ENCODE measurements at regions of chr9 and their contacts with region 1.

Region 1: GRCh38 chr9:36873247-36873875 is 160.7 kb downstream of the PAX5 start:
- DNase-seq: peak; percentile 43
- H3K4me3 ChIP-seq: no peak overlapping the region
- H3K27ac ChIP-seq: no peak overlapping the region
- H3K4me1 ChIP-seq: no peaks in the 10 kb centered on the region
- H3K27me3 ChIP-seq: peaks cover 4 to 16% of the 10 kb centered on the region in 2 experiments
- CTCF ChIP-seq: peak; percentile 80 to 90
- POLR2A ChIP-seq: no peak

Region 2: DNA sequence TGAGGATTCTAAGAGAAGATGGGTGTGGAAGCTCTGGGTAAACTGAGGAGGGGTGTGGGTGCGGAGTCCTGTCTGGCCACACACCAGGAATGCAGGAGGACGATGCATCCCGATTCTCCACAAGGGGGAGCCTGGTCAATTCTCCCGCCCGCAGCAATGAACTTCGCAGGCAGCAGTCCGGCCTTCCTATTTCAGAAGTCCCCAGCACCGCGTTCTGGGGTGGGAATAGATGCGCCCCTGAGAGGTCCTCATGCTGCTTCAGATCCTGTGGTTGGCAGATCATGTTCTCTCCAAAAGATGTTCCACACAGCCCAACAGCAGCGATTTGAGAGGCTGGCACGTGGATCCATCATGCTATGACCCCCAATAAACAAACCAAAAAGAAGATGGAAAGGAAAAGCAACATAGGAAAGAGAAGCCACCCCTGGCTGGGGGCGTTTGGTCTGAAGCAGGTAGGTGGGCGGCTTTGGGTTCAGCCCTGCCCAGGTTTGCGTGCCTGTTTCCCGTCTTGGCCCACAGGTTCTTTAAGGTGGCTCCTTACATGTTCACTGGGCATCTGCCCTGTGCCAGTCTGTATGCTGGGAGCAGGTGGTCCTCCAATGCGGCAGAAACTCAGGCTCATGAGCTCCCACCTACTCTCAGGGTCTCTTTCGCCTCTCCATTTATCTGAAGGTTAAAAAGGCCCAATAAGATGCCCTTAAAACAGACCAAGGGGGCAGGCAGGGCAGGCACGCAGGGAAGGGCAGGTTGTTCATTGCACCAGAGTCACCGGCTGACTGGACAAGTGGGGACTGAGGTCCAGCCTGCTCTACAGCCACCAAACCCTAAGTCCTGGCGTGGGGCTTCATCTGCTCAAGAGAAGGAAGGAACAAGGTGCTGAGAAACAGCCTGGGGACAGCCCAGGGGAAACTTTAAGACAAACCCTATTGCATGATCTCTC is 10.9 kb before region 1 on chr9:
- CTCF ChIA-PET with region 1: interaction called, 52 read pairs
- POLR2A ChIA-PET with region 1: no interaction called
- dilution Hi-C with region 1: no loop called
- intact Hi-C with region 1: no loop called
- DNase-seq: peak; percentile 40
- H3K4me3 ChIP-seq: no peak overlapping the region
- H3K27ac ChIP-seq: no peak overlapping the region
- H3K4me1 ChIP-seq: no peaks in the 10 kb centered on the region
- H3K27me3 ChIP-seq: peaks cover 26 to 35% of the 10 kb centered on the region in 2 experiments
- CTCF ChIP-seq: peak; percentile 65 to 84
- POLR2A ChIP-seq: no peak

Region 3: GRCh38 chr9:36903541-36904435 is 30.4 kb after region 1 on chr9:
- CTCF ChIA-PET with region 1: interaction called, 14 read pairs
- POLR2A ChIA-PET with region 1: no interaction called
- dilution Hi-C with region 1: no loop called
- intact Hi-C with region 1: no loop called
- DNase-seq: peak; percentile 80
- H3K4me3 ChIP-seq: no peak overlapping the region
- H3K27ac ChIP-seq: no peak overlapping the region
- H3K4me1 ChIP-seq: peaks cover 3% of the 10 kb centered on the region
- H3K27me3 ChIP-seq: peaks cover 20 to 22% of the 10 kb centered on the region in 2 experiments
- CTCF ChIP-seq: no peak
- POLR2A ChIP-seq: no peak

Region 4: DNA sequence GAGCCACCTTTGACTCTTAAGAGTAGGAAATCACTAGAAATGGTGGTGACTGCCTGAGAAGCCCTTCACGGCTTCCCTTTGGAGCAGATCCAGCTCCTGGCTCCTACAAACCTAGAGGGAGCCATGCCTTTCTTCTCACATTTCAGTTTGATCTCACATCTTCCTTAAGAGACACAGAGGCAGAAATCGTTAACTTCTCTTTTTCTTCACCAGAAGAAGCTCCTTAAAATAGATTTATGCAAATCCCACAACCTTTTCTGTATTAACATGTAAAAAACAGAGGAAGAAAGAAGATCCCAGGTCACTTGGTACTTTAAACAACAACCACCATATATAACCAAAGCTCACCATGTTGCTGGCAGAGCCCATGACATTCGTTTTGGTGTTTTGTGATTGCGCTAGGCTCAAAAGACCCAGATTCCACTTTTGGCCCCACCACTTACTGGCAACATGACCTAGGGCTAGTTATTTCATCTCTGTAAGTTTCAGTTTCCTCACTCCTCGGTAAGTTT is 131.1 kb after region 1 on chr9:
- CTCF ChIA-PET with region 1: interaction called, 10 read pairs
- POLR2A ChIA-PET with region 1: no interaction called
- dilution Hi-C with region 1: no loop called
- intact Hi-C with region 1: no loop called
- DNase-seq: no peak
- H3K4me3 ChIP-seq: no peak overlapping the region
- H3K27ac ChIP-seq: no peak overlapping the region
- H3K4me1 ChIP-seq: no peaks in the 10 kb centered on the region
- H3K27me3 ChIP-seq: peaks cover 57 to 71% of the 10 kb centered on the region in 2 experiments
- CTCF ChIP-seq: no peak
- POLR2A ChIP-seq: no peak

Region 5: GRCh38 chr9:37329576-37329975 is 456.2 kb after region 1 on chr9:
- CTCF ChIA-PET with region 1: interaction called, 34 read pairs
- POLR2A ChIA-PET with region 1: no interaction called
- dilution Hi-C with region 1: no loop called
- intact Hi-C with region 1: loop called (anchors 5 kb)
- DNase-seq: peak; percentile 38
- H3K4me3 ChIP-seq: no peak overlapping the region
- H3K27ac ChIP-seq: no peak overlapping the region
- H3K4me1 ChIP-seq: no peaks in the 10 kb centered on the region
- H3K27me3 ChIP-seq: no peaks in the 10 kb centered on the region
- CTCF ChIP-seq: peak in 1 of 2 donors; percentile 5
- POLR2A ChIP-seq: no peak

Region 6: GRCh38 chr9:37592108-37592951 is 719.0 kb after region 1 on chr9 and contains the start of gene TOMM5:
- CTCF ChIA-PET with region 1: no interaction called
- POLR2A ChIA-PET with region 1: no interaction called
- dilution Hi-C with region 1: no loop called
- intact Hi-C with region 1: no loop called
- DNase-seq: peak; percentile 93
- H3K4me3 ChIP-seq: peak within 1 kb of the TSS; percentile 86 to 95 (median 90)
- H3K27ac ChIP-seq: peak within 1 kb of the TSS; percentile 76
- H3K4me1 ChIP-seq: peaks cover 15% of the 10 kb centered on the region
- H3K27me3 ChIP-seq: peaks cover 8% of the 10 kb centered on the region in 2 experiments
- CTCF ChIP-seq: no peak
- POLR2A ChIP-seq: peak; percentile 96
- total RNA-seq, gene TOMM5: 145 and 147 TPM in 2 replicates